H1 (cell line): ENCODE measurements at regions of chr14 and their contacts with region 1.

Region 1: GRCh38 chr14:99320105-99320572 is 48.1 kb upstream of the BCL11B start:
- DNase-seq: peak in 1 of 2 experiments; percentile 96
- H3K4me3 ChIP-seq: no peak overlapping the region
- H3K27ac ChIP-seq: no peak overlapping the region
- H3K4me1 ChIP-seq: peaks cover 0 to 14% (median 6%) of the 10 kb centered on the region in 4 experiments; a peak in 6 of 7 replicates
- H3K27me3 ChIP-seq: no peaks in the 10 kb centered on the region; a peak in 1 of 7 replicates
- CTCF ChIP-seq: peak; percentile 90 to 100 (median 94)
- EP300 ChIP-seq: no peak
- POLR2A ChIP-seq: no peak
- RAD21 ChIP-seq: peak; percentile 67 to 78

Region 2: DNA sequence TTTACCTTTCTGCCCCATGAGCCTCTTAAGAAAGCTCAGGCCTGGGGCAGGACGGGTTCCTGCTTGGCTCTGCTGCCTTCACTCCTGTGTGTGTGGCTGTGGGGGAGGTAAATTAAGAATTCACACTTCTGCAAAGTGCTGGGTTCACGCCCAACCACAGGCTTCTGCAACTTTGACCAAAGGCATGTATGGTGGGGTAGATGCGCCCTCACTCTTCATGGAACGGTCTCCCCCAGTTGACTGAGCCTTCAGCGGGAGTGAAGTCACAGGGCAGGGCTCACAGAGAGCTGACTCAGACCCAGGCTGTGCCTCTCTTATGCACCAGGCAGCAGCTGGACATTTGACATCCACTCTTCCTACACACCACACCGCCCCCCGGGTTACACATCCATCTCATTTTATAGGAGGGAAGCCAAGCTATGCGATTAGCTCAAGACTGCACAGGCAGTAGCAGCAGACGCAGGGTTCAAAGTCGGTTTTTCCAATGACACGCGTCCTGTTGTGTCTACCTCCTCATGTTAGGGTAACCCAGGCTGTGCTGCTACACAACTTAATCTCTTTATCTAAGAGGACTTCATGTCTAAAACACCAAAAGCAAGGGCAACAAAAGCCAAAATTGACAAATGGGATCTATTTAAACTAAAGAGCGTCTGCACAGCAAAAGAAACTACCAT is 32.7 kb before region 1 on chr14:
- CTCF ChIA-PET with region 1: interaction called, 10 read pairs
- POLR2A ChIA-PET with region 1: no interaction called
- DNase-seq: peak in 1 of 2 experiments; percentile 29
- H3K4me3 ChIP-seq: no peak overlapping the region
- H3K27ac ChIP-seq: no peak overlapping the region
- H3K4me1 ChIP-seq: peaks cover 0 to 6% (median 1%) of the 10 kb centered on the region in 4 experiments; a peak in 3 of 7 replicates
- H3K27me3 ChIP-seq: no peaks in the 10 kb centered on the region
- CTCF ChIP-seq: no peak
- EP300 ChIP-seq: no peak
- POLR2A ChIP-seq: no peak
- RAD21 ChIP-seq: no peak

Region 3: DNA sequence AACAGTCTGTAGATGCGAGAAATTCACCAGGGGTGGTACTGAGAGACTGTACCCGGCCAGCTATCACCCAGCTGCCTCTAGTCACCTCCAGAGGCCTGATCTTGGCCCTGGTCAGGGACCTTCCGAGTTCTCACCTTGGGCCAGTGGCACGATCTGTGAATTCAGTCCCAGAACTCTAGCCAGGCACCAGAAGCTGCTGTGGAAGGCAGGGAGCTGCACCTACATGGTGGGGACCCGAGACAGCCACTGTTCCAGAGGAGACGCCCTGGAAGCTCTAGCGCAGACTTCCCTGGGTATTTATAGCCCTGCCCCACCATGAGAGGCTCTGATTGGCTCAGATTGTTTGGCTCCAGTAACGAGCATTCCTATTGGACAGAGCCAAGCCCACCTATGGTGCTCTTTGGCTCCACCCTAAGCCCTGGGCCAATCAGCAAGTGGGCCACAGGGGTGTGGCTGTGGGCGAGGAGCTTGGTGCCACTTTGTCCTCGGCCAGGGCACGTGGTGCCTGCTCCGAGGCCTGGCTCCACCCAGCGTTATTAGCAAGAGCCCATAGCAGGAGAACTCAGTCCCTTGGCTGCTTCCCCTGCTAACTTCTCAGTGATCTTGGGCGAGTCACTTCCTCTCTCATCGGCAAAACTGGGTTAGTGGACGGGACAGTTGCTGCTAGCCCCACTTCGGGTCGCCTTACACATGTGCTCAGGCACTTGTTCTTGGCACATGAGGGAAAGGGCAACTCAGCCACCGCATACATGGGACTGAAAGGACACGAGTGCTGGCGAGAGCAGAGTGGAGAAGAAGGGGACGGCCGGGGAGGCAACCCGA is 40.8 kb after region 1 on chr14:
- CTCF ChIA-PET with region 1: interaction called, 20 read pairs
- POLR2A ChIA-PET with region 1: no interaction called
- DNase-seq: no peak
- H3K4me3 ChIP-seq: no peak overlapping the region
- H3K27ac ChIP-seq: no peak overlapping the region
- H3K4me1 ChIP-seq: peaks cover 0 to 6% (median 2%) of the 10 kb centered on the region in 4 experiments; a peak in 4 of 7 replicates
- H3K27me3 ChIP-seq: no peaks in the 10 kb centered on the region; a peak in 1 of 7 replicates
- CTCF ChIP-seq: no peak
- EP300 ChIP-seq: no peak
- POLR2A ChIP-seq: no peak
- RAD21 ChIP-seq: no peak

Region 4: DNA sequence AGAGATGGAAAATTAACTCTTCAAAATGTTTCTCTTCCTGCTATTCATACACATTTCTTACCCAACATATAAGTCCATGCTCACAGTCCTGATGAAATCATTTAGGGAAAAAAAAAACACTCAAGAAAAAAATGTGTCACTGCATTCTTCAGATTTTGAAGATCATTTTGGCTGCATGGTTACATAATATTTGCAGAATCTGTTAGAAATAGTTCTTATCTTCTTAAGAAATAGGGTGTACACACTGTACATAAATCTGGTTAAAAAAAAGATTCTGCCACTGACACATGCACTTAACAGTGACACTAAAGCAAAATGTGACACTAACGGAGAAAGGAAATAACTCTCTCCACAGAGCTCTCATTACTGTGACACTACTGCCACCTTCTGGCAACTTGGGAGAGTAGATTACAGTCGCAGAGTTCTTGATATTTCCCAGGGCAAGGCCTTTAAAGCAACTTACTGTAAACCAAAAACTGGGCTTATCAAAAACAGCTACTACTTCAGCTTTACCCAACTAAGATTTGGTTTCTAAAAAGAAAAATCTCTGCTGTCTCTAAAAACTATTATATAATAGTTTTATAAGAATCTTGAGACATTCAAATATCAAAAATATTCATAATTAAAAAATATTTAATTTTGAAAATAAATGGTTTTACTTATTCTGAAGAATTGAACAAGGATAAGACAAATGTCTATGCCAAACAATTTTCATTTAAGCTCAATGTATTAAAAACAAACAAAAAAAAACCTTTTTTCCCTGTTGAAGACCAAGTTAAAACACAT is 95.5 kb after region 1 on chr14:
- CTCF ChIA-PET with region 1: interaction called, 29 read pairs
- POLR2A ChIA-PET with region 1: no interaction called
- DNase-seq: no peak
- H3K4me3 ChIP-seq: no peak overlapping the region
- H3K27ac ChIP-seq: no peak overlapping the region
- H3K4me1 ChIP-seq: peaks cover 6 to 31% (median 18%) of the 10 kb centered on the region in 4 experiments
- H3K27me3 ChIP-seq: no peaks in the 10 kb centered on the region
- CTCF ChIP-seq: peak in 2 of 3 experiments; percentile 82 to 83; a peak in 3 of 4 replicates
- EP300 ChIP-seq: no peak
- POLR2A ChIP-seq: no peak
- RAD21 ChIP-seq: peak; percentile 95 to 97